ENCODE measurements at regions of chr7 and their contacts with region 1.

Region 1: GRCh38 chr7:6032167-6032566 is 991 bp downstream of the ANKRD61 start:
- DNase-seq: no peak
- H3K4me3 ChIP-seq: no peak overlapping the region
- H3K27ac ChIP-seq: no peak overlapping the region
- H3K4me1 ChIP-seq: no peaks in the 10 kb centered on the region
- H3K27me3 ChIP-seq: no peaks in the 10 kb centered on the region
- CTCF ChIP-seq: no peak

Region 2: DNA sequence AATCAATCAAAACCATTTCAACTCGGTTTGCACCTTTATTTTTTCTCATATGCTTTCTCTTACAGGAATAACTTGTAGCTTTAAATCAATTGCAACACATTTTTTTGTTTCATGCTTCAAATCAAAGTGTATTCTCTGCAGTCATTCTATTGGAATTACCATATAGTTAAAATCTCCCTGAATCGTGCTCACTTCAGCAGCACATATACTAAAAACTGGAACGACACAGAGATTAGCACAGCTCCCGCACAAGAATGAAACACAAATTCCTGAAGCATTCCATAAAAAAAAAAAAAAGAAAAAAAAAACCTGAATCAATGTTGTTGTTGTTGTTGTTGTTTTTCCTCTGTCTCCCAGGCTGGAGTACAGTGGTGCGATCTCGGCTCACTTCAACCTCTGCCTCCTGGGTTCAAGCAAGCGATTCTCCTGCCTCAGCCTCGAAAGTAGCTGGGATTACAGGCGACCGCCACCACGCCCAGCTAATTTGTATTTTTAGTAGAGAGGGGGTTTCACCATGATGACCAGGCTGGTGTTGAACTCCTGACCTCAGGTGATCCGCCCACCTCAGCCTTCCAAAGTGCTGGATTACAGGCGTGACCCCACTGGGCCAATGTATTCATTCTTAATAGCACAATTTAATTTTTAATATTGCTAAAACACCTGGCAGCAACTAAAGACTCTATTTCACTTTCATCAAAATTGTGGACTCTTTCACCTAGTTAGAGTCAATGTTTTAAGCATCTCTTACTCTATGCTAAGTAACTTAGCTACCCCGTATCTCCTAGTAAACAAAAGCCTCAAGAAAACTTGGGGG is 25.4 kb after region 1 on chr7:
- CTCF ChIA-PET with region 1: no interaction called
- dilution Hi-C with region 1: no loop called
- in situ Hi-C with region 1: no loop called
- intact Hi-C with region 1: loop called (anchors 1 kb)
- DNase-seq: no peak
- H3K4me3 ChIP-seq: peak overlapping the region; percentile 71 to 93 (median 90)
- H3K27ac ChIP-seq: no peak overlapping the region
- H3K4me1 ChIP-seq: peaks cover 10% of the 10 kb centered on the region
- H3K27me3 ChIP-seq: no peaks in the 10 kb centered on the region
- CTCF ChIP-seq: no peak